PC-9 (cell line): ENCODE measurements at regions of chr18 and their contacts with region 1.

Region 1: GRCh38 chr18:57859314-57859713 is 56.2 kb upstream of the ATP8B1 start:
- DNase-seq: no peak
- H3K4me3 ChIP-seq: no peak overlapping the region
- H3K27ac ChIP-seq: no peak overlapping the region
- H3K4me1 ChIP-seq: 0 out of 2 replicates have a peak, but pooled peaks cover 5% of the 10 kb centered on the region
- H3K27me3 ChIP-seq: no peaks in the 10 kb centered on the region
- CTCF ChIP-seq: peak; percentile 71

Region 2: DNA sequence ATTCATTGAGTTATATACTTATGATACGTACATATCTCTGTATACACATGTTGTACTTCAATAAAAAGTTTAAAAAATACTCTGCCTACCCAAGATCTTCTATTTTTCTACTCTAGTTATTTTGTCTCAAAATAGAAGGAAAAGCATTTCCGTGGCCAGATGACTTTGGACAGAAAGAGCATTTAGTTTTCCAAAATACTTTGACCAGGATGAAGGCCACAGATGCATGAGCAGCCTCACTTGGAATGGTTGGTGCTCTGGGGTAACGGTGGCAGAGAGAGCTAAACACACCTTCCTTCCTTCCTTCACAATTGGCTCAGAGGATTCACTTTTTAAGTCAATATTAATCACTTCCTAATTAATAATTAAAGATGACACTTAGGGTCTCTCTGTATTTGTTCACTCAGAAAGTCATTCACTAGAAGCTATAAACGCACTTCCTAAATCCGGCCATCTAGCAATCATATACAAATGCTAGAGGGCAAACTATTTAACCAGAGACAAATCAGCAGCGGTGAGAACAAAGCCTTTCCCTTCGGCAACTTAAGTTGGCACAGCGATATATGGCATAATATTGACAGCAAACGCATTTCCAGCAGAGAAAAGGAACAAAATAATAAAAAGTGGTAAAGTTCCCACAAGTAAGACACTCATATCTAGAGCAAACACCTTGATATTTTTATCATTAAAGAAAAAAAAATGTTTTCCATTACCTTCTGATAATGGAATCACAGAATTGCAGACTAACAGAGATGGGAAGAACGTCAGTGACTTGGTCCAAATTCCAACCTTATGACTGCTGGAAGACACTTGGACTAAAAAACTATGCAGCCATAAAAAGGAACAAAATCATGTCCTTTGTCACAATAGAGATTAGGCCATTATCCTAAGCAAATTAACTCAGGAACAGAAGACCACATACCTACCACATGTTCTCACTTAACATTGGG is 181.8 kb before region 1 on chr18:
- CTCF ChIA-PET with region 1: interaction called, 17 read pairs
- POLR2A ChIA-PET with region 1: no interaction called
- intact Hi-C with region 1: no loop called
- DNase-seq: no peak
- H3K4me3 ChIP-seq: no peak overlapping the region
- H3K27ac ChIP-seq: no peak overlapping the region
- H3K4me1 ChIP-seq: no peaks in the 10 kb centered on the region
- H3K27me3 ChIP-seq: no peaks in the 10 kb centered on the region
- CTCF ChIP-seq: no peak

Region 3: GRCh38 chr18:57833443-57834101 is 25.7 kb before region 1 on chr18:
- CTCF ChIA-PET with region 1: no interaction called
- POLR2A ChIA-PET with region 1: no interaction called
- intact Hi-C with region 1: no loop called
- DNase-seq: peak; percentile 11 to 73
- H3K4me3 ChIP-seq: no peak overlapping the region
- H3K27ac ChIP-seq: peak overlapping the region; percentile 14; the same call in 1 of the 2 replicates
- H3K4me1 ChIP-seq: peaks cover 12% of the 10 kb centered on the region
- H3K27me3 ChIP-seq: no peaks in the 10 kb centered on the region
- CTCF ChIP-seq: no peak